Psoas muscle (tissue), 8 donors: ENCODE measurements at regions of chrX and their contacts with region 1.

Region 1: DNA sequence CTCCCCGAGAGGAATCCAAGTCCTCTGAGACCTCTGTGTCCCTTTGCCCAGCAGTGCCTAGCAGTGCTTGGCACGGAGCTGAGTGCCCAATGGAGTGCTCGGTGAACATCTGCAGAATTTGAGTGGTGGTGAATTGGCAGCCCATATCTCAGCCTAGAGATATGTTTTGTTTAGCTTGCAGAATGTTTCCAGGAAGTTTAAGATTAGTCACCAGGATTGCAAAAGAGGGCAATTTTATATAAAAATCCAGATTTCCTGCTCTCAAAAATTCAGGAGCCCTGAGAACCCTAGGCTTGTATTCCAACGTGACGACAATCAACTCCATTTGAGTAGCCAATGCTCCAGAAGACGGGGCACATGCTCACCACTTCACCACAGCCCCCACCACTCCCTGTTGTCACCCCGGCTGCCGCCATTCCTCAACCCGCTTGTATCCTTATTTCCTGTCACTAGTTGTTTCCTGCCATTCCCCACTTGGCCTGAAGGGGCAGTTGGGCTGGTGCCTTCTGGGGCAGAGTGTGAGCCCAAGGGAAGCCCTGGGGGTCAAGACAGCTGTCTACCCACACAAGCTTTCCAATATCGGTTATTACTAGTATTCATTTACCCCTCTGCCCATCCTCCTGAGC is 116.9 kb downstream of the EFNB1 start:
- DNase-seq: no peak
- ATAC-seq: peak in 1 of 4 donors; percentile 35
- H3K4me3 ChIP-seq: no peak overlapping the region
- H3K27ac ChIP-seq: no peak overlapping the region
- H3K4me1 ChIP-seq: no peaks in the 10 kb centered on the region
- H3K27me3 ChIP-seq: no peaks in the 10 kb centered on the region
- CTCF ChIP-seq: no peak

Region 2: DNA sequence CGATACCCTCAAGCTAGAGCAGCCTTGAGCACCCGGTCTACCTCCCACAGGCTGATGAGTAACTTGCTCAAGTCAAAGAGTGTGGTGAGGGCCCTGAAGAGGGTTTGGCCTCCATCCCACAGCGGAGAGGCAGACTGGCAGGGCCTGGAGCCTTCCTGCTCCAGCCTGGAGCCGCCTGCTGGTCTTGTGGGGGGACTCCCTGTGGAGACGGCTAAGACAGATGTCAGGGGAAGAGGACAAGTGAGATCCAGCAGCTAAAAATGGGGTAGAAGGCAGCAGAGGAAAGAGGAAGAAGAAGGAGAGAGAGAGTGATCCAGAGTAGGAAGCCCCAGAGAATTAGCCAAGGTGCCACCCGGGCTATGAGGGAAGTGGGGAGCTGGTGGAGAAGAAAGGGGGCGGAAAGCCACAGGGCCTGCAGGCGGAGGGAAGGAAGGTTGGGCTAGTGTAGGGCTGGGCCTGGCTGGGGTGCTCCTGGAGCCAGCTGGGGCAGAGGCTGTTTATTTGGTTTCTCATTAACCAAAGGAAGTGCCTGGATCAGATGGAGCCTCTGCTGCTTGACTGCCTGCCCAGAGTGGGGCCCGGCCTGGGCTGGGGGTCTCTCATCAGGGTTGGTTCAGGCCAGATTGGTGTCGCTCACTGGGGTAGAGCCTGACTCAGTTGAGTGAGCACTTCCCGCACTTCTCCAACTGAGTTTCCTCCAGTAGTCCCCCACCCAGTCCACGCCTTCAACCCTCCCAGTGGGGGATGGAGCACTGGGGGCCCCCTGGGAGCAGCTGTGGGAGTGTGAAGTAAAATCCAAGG is 102.7 kb before region 1 on chrX:
- intact Hi-C with region 1: no loop called
- DNase-seq: no peak
- ATAC-seq: no peak
- H3K4me3 ChIP-seq: no peak overlapping the region
- H3K27ac ChIP-seq: no peak overlapping the region
- H3K4me1 ChIP-seq: no peaks in the 10 kb centered on the region
- H3K27me3 ChIP-seq: peaks cover 0 to 6% (median 0%) of the 10 kb centered on the region in 3 donors
- CTCF ChIP-seq: no peak

Region 3: GRCh38 chrX:68894513-68895340 is 51.0 kb before region 1 on chrX:
- intact Hi-C with region 1: loop called in 1 of 2 experiments (anchors 5 kb)
- DNase-seq: peak; percentile 54 to 79
- ATAC-seq: peak; percentile 82 to 91 (median 88)
- H3K4me3 ChIP-seq: peak overlapping the region; percentile 50
- H3K27ac ChIP-seq: peak overlapping the region; percentile 85
- H3K4me1 ChIP-seq: peaks cover 16% of the 10 kb centered on the region
- H3K27me3 ChIP-seq: peaks cover 0 to 4% (median 0%) of the 10 kb centered on the region in 3 donors
- CTCF ChIP-seq: no peak

Region 4: GRCh38 chrX:68989865-68990606 is 44.3 kb after region 1 on chrX:
- intact Hi-C with region 1: loop called (anchors 5 kb)
- DNase-seq: peak in 1 of 2 donors; percentile 65
- ATAC-seq: peak in 3 of 4 donors; percentile 36 to 54 (median 43)
- H3K4me3 ChIP-seq: no peak overlapping the region
- H3K27ac ChIP-seq: no peak overlapping the region
- H3K4me1 ChIP-seq: no peaks in the 10 kb centered on the region
- H3K27me3 ChIP-seq: peaks cover 0 to 23% (median 0%) of the 10 kb centered on the region in 3 donors
- CTCF ChIP-seq: no peak